Heart left ventricle (tissue), 16 donors: ENCODE measurements at regions of chr9 and their contacts with region 1.

Region 1: DNA sequence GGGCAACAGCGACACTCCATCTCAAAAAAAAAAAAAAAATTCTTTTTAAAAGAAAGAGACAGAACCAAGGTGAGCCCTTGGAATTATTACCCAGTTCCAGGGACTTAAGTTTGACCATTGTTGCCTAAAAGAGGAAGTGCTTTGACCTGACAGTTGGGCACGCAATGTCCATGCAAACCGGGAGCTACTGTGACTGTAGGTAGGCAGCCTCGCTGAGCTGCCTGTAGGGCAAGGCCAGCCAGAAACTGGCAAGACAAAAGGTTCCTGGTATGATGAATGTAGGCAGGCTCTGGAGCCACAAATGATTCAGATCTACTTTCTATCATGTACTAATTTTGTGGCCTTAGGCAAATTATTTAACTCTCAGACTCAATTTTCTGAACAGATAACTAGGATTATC is 334.8 kb upstream of the ZNF462 start:
- DNase-seq: no peak
- ATAC-seq: no peak
- H3K4me3 ChIP-seq: no peak overlapping the region
- H3K27ac ChIP-seq: no peak overlapping the region
- H3K4me1 ChIP-seq: peaks cover 0 to 13% (median 0%) of the 10 kb centered on the region in 12 donors
- H3K27me3 ChIP-seq: no peaks in the 10 kb centered on the region
- CTCF ChIP-seq: no peak
- POLR2A ChIP-seq: no peak

Region 2: GRCh38 chr9:106467113-106467864 is 60.9 kb before region 1 on chr9:
- intact Hi-C with region 1: loop called in 2 of 10 experiments (anchors 10 kb)
- DNase-seq: no peak
- ATAC-seq: no peak
- H3K4me3 ChIP-seq: no peak overlapping the region
- H3K27ac ChIP-seq: no peak overlapping the region
- H3K4me1 ChIP-seq: peaks cover 0 to 10% (median 0%) of the 10 kb centered on the region in 12 donors
- H3K27me3 ChIP-seq: no peaks in the 10 kb centered on the region
- CTCF ChIP-seq: no peak
- POLR2A ChIP-seq: no peak